Adrenal gland (tissue), 19 donors: ENCODE measurements at regions of chr5 and their contacts with region 1.

Region 1: DNA sequence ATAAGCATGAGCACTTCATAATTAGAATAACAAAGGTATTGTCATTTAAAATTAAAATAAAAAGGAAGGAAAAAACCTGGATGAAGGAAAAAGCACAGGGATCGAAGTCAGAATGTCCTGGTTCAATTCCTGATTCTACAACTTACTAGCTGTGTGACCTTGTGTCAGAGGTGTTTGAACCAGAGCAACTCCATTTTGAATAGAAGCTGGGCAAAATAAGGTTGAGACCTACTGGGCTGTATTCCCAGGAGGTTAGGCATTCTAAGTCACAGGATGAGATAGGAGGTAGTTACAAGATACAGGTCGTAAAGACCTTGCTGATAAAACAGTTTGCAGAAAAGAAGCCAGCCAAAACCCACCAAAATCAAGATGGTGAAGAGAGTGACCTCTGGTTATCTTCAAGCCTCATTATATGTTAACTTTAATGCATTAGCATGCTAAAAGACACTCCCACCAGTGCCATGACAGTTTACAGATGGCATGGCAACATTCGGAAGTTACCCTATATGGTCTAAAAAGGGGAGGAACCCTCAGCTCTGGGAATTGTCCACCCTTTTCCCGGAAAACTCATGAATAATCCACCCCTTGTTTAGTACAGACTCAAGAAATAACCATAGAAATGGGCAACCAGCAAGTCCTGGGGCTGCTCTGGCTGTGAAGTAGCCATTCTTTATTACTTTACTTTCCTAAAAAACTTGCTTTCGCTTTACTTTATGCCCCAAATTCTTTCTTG is 412.7 kb downstream of the PIK3R1 start:
- DNase-seq: no peak
- H3K4me3 ChIP-seq: no peak overlapping the region
- H3K27ac ChIP-seq: no peak overlapping the region
- H3K4me1 ChIP-seq: no peaks in the 10 kb centered on the region
- H3K27me3 ChIP-seq: no peaks in the 10 kb centered on the region
- CTCF ChIP-seq: no peak
- POLR2A ChIP-seq: no peak

Region 2: GRCh38 chr5:68339921-68340321 is 288.3 kb before region 1 on chr5:
- intact Hi-C with region 1: loop called in 1 of 2 experiments (anchors 5 kb)
- DNase-seq: no peak
- H3K4me3 ChIP-seq: no peak overlapping the region
- H3K27ac ChIP-seq: no peak overlapping the region
- H3K4me1 ChIP-seq: peaks cover 11 to 17% of the 10 kb centered on the region in 2 donors
- H3K27me3 ChIP-seq: no peaks in the 10 kb centered on the region
- CTCF ChIP-seq: no peak
- POLR2A ChIP-seq: no peak

Region 3: DNA sequence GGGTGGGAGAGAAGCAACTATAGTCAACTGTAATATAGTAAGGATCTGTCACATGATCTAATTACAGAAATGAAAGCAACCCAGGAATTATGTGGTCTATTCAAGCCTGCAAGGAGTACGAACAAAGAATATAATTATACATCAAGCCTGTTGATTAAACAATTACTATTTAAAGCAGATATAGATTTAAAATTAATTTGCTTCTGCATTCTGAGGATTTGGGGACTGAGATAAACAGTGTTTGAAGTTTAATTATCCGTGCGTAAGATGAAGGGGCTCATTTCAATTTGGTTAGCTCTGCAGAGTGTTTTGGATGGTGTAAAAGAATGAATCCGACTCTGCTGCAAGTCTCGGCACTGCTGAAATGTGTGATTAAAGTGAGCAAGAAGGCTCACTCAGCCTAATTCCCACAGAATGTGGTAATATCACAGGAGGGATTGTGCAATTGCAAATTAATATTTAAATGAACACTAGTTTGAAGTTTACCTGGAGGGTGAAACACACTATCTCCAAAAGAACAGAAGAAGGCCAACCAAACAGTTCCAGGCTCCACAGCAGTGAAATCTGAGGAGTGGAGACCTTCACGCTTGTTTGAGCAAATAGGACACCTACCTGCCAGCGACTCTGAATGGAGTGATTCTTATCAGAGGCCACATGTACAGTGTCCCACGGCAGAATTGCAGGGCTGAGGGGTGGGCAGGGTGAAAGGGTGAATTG is 45.0 kb after region 1 on chr5:
- intact Hi-C with region 1: no loop called
- DNase-seq: no peak
- H3K4me3 ChIP-seq: no peak overlapping the region
- H3K27ac ChIP-seq: no peak overlapping the region
- H3K4me1 ChIP-seq: no peaks in the 10 kb centered on the region
- H3K27me3 ChIP-seq: no peaks in the 10 kb centered on the region
- CTCF ChIP-seq: no peak
- POLR2A ChIP-seq: no peak

Region 4: GRCh38 chr5:68839019-68839552 is 210.8 kb after region 1 on chr5:
- intact Hi-C with region 1: no loop called
- DNase-seq: no peak
- H3K4me3 ChIP-seq: no peak overlapping the region
- H3K27ac ChIP-seq: no peak overlapping the region
- H3K4me1 ChIP-seq: no peaks in the 10 kb centered on the region
- H3K27me3 ChIP-seq: no peaks in the 10 kb centered on the region
- CTCF ChIP-seq: no peak
- POLR2A ChIP-seq: no peak